Kidney (tissue), 22 donors: ENCODE measurements at regions of chr2 and their contacts with region 1.

Region 1: DNA sequence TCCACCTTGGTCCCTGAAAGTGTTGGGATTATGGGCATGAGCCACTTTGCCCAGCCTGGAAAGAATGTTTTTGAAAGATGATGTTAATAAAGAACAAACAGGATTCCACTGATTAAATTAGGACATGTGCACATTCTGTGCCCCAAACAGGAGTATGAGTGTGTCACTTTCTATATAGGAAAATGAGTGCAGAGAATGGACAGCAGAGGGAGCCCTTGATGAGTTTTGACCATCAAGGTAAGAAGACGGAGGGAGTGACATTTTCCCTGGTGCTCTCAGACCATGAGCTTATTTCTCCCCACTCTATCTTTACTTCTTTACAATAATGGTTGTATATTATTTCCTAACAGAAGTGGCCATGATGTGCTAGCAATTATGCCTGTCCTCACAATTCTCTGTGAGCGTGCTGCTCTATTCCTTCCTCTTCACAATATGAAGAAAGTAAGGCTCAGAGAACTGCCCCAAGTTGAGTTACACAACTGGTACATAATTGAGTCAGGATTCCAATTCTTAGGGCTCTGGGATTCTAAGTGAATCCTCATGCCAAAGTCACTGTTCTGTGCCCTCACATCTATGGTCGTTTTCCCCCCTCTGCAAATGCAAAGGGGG is 20.6 kb downstream of the RPL37A start:
- DNase-seq: peak in 4 of 5 donors; percentile 77 to 94 (median 85)
- H3K4me3 ChIP-seq: no peak overlapping the region
- H3K27ac ChIP-seq: no peak overlapping the region
- H3K4me1 ChIP-seq: no peaks in the 10 kb centered on the region
- H3K27me3 ChIP-seq: no peaks in the 10 kb centered on the region
- CTCF ChIP-seq: peak; percentile 74

Region 2: DNA sequence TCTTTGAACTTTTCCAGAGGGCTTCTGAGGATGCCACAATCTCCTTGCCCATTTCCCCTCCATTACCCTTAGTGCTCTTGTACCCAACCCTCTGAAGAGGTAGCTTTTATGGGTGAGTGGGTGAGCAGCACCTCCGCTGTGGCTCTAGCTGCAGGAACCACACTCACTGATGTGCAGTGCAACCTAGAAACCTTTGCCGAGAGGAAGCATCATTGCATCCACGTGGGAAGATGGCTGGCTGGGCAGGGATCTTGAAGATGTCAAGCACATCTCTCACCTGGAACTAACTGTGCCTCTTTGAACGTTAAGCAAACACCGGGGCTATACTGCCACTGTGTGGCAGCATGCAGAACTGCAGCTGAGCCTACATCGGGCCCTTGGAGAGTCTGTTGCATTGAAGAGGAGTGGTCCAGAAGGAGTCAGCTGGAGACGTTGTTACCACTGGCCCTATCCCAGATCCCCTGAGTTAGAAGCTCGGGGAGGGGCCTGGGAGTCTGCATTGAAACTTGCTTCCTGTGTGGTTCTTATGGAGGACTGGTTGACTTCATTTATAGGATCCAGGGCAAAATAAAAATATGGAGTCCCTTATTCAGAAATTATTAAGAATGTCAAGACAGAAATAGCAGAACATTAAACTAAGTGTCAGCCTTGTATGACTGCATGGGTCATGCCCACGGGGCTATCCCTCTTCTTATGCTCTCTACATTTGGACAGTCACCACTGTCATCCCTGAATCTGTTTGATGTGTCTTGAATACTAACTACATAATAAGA is 147.4 kb after region 1 on chr2:
- intact Hi-C with region 1: loop called (anchors 5 kb)
- DNase-seq: peak; percentile 74 to 92 (median 87)
- H3K4me3 ChIP-seq: no peak overlapping the region
- H3K27ac ChIP-seq: no peak overlapping the region
- H3K4me1 ChIP-seq: no peaks in the 10 kb centered on the region
- H3K27me3 ChIP-seq: no peaks in the 10 kb centered on the region
- CTCF ChIP-seq: peak; percentile 100

Region 3: GRCh38 chr2:217756375-217757107 is 1237.3 kb after region 1 on chr2:
- intact Hi-C with region 1: loop called (anchors 10 kb)
- DNase-seq: peak; percentile 89 to 93 (median 91)
- H3K4me3 ChIP-seq: peak overlapping the region in 2 of 3 donors; percentile 11 to 26
- H3K27ac ChIP-seq: no peak overlapping the region
- H3K4me1 ChIP-seq: no peaks in the 10 kb centered on the region
- H3K27me3 ChIP-seq: no peaks in the 10 kb centered on the region
- CTCF ChIP-seq: peak; percentile 61